H1 (cell line): ENCODE measurements at regions of chr17 and their contacts with region 1.

Region 1: GRCh38 chr17:17370711-17371110 is 67.5 kb downstream of the NT5M start:
- DNase-seq: no peak
- H3K4me3 ChIP-seq: no peak overlapping the region
- H3K27ac ChIP-seq: no peak overlapping the region
- H3K4me1 ChIP-seq: no peaks in the 10 kb centered on the region
- H3K27me3 ChIP-seq: no peaks in the 10 kb centered on the region
- CTCF ChIP-seq: no peak
- EP300 ChIP-seq: no peak
- POLR2A ChIP-seq: no peak
- RAD21 ChIP-seq: no peak

Region 2: DNA sequence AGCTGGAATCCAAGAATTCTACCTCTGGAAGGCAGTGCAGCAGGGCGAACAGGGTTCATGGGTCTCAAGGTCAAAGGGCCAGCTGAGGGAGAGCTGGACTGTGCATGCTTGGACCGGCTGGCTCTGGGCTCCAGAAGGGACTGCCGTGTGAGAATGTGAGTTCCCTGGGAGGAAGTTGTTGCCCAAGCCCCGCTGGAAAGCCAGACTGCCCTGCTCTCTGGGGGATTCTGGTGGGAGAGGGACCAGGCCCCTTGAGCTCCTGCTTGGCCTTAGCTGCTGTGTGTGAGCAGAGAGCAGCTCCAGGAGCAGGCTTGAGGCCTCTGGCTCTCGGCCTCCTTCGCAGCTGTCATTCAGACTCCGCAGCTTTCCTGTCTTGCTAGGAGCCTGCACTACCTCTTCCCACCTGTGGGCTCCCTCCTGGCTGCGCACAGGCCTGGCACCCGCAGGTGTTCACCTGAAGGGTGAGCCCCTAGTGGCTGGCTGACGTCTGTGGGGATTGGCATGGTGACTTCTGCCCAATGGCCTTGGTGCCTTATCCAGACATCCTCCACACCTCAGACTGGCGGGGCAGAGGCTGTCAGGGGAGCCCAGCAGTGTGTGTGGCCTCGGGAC is 17.2 kb after region 1 on chr17:
- CTCF ChIA-PET with region 1: interaction called, 10 read pairs
- POLR2A ChIA-PET with region 1: no interaction called
- DNase-seq: peak; percentile 47 to 70
- H3K4me3 ChIP-seq: no peak overlapping the region
- H3K27ac ChIP-seq: no peak overlapping the region
- H3K4me1 ChIP-seq: no peaks in the 10 kb centered on the region; a peak in 1 of 7 replicates
- H3K27me3 ChIP-seq: no peaks in the 10 kb centered on the region
- CTCF ChIP-seq: peak; percentile 95 to 99 (median 96)
- EP300 ChIP-seq: no peak
- POLR2A ChIP-seq: no peak
- RAD21 ChIP-seq: peak; percentile 50 to 70; a peak in 3 of 4 replicates